K562 (cell line): ENCODE measurements at regions of chr7 and their contacts with region 1.

Region 1: GRCh38 chr7:151448261-151449252 is 8.6 kb upstream of the CRYGN start:
- DNase-seq: peak; percentile 81 to 92 (median 88)
- ATAC-seq: peak; percentile 93
- H3K4me3 ChIP-seq: peak overlapping the region; percentile 27
- H3K27ac ChIP-seq: no peak overlapping the region
- H3K4me1 ChIP-seq: peaks cover 0 to 24% of the 10 kb centered on the region in 2 experiments; a peak in 2 of 5 replicates
- H3K27me3 ChIP-seq: peaks cover 37 to 40% of the 10 kb centered on the region in 2 experiments
- CTCF ChIP-seq: peak; percentile 94 to 96 (median 95)
- EP300 ChIP-seq: no peak
- POLR2A ChIP-seq: no peak
- RAD21 ChIP-seq: peak; percentile 85 to 96

Region 2: DNA sequence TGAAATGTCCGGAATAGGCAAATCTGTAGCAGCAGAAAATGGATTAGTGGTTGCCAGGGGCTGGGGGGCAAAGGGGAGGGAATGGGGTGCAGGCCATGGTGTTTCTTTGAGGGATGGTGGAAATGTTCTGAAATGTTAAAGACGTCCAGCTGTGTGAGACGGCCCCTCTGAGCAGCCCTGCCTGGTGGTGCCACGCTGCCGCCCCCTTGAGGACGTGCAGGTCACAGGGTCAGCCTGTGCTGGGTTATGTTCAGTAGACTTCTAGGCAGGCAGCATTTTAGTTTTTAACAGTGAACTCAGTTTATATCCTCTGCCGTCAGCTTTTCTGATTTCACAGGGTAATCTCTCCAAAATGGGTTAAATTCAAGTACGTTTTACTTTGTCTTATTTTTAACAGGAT is 97.5 kb before region 1 on chr7:
- CTCF ChIA-PET with region 1: no interaction called
- POLR2A ChIA-PET with region 1: interaction called, 3 read pairs
- in situ Hi-C with region 1: loop called (anchors 5 kb)
- intact Hi-C with region 1: no loop called
- DNase-seq: peak; percentile 57 to 72 (median 62)
- ATAC-seq: peak; percentile 79
- H3K4me3 ChIP-seq: no peak overlapping the region
- H3K27ac ChIP-seq: no peak overlapping the region
- H3K4me1 ChIP-seq: peaks cover 4 to 11% of the 10 kb centered on the region in 2 experiments; a peak in 4 of 5 replicates
- H3K27me3 ChIP-seq: no peaks in the 10 kb centered on the region
- CTCF ChIP-seq: peak; percentile 68 to 75 (median 71)
- EP300 ChIP-seq: no peak
- POLR2A ChIP-seq: no peak
- RAD21 ChIP-seq: peak in 1 of 2 experiments; percentile 30; a peak in 1 of 4 replicates

Region 3: GRCh38 chr7:151398446-151399304 is 49.9 kb before region 1 on chr7:
- CTCF ChIA-PET with region 1: no interaction called
- POLR2A ChIA-PET with region 1: interaction called, 3 read pairs
- in situ Hi-C with region 1: no loop called
- intact Hi-C with region 1: loop called (anchors 10 kb)
- DNase-seq: peak in 1 of 4 experiments; percentile 29
- ATAC-seq: no peak
- H3K4me3 ChIP-seq: no peak overlapping the region
- H3K27ac ChIP-seq: no peak overlapping the region; the same call in 2 of the 3 replicates
- H3K4me1 ChIP-seq: peaks cover 33 to 53% of the 10 kb centered on the region in 2 experiments
- H3K27me3 ChIP-seq: no peaks in the 10 kb centered on the region; a peak in 1 of 5 replicates
- CTCF ChIP-seq: 0 out of 6 replicates have a peak, but pooled peaks of 1 of the 3 experiments have one; percentile 32
- EP300 ChIP-seq: no peak
- POLR2A ChIP-seq: no peak
- RAD21 ChIP-seq: no peak

Region 4: GRCh38 chr7:151459726-151460473 is 11.3 kb after region 1 on chr7:
- CTCF ChIA-PET with region 1: interaction called, 3 read pairs
- POLR2A ChIA-PET with region 1: interaction called, 10 read pairs
- in situ Hi-C with region 1: no loop called
- intact Hi-C with region 1: no loop called
- DNase-seq: peak in 1 of 4 experiments; percentile 8
- ATAC-seq: peak; percentile 18; the same call in 2 of the 3 replicates
- H3K4me3 ChIP-seq: no peak overlapping the region
- H3K27ac ChIP-seq: no peak overlapping the region
- H3K4me1 ChIP-seq: peaks cover 0 to 3% of the 10 kb centered on the region in 2 experiments; a peak in 1 of 5 replicates
- H3K27me3 ChIP-seq: peaks cover 42 to 55% of the 10 kb centered on the region in 2 experiments
- CTCF ChIP-seq: 0 out of 6 replicates have a peak, but pooled peaks of 1 of the 3 experiments have one; percentile 7
- EP300 ChIP-seq: no peak
- POLR2A ChIP-seq: no peak
- RAD21 ChIP-seq: peak in 1 of 2 experiments; percentile 27; a peak in 1 of 4 replicates